Common myeloid progenitor, CD34-positive (primary cell): ENCODE measurements at regions of chr10 and their contacts with region 1.

Region 1: GRCh38 chr10:75235375-75236177 is at the start of gene COMTD1:
- DNase-seq: peak; percentile 87 to 92 (median 89)
- H3K4me3 ChIP-seq: peak within 1 kb of the TSS; percentile 50 to 86 (median 78)
- H3K27ac ChIP-seq: peak within 1 kb of the TSS in 1 of 2 experiments; percentile 43
- H3K4me1 ChIP-seq: peaks cover 0 to 22% (median 16%) of the 10 kb centered on the region in 4 experiments
- H3K27me3 ChIP-seq: no peaks in the 10 kb centered on the region

Region 2: DNA sequence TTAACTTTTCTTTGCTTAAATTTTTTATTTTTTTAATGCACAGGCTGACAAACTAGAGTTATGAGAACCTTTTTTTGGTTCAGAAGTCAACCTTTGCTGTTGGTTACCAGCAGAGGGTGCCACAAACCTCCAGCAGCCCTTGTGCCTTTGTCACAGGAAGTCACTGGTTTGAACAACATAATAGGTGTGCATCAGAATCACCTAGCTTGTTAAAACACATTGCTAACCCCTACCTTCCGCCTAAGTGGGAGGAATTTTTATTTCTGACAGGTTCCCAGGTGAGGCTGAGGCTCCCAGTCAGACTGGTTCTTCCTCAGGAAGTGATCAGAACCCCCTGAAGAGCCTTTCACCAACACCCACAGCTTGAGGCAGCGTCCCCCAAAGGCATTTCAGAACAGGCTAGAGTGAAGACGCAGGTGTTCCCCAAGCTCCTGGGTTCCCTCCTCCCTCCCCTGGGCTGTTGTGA is 47.6 kb before region 1 on chr10:
- CTCF ChIA-PET with region 1: interaction called, 46 read pairs
- POLR2A ChIA-PET with region 1: no interaction called
- DNase-seq: peak; percentile 70 to 88 (median 83)
- H3K4me3 ChIP-seq: no peak overlapping the region
- H3K27ac ChIP-seq: no peak overlapping the region
- H3K4me1 ChIP-seq: no peaks in the 10 kb centered on the region
- H3K27me3 ChIP-seq: no peaks in the 10 kb centered on the region

Region 3: DNA sequence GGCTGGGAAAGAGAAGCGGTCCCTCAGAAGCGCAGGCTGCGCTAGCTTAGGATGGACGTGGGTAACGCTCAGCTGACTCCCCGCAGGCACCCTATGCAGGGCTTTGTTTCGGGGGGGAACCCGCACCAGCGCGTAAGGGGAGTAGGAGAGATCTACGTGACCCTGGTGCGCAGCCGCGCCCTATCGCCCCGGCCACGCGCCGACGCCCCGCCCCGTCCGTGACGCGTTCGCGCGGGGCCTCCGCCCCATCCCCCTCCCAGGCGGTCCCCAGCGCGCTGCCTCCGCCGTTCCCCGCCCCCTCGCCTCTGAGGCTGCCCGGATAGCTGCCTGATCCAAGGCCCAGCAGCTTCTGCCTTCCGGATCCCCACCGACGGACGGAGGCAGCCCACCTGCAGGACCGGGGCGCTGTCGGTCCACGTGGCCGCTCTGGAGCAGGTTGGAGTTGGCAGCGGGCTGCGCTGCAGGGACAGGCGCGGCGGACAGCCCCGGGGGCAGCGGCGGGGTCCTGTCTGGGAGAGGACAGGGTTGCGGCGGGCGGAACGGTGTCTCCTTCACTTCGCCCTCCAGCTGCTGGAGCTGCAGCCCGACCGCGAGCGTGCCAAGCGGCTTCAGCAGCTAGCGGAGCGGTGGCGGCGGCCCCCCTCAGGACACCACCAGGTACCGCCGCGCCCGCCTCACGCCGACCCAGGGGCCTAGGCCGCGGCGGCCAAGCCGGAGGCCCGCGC is 25.1 kb before region 1 on chr10 and contains the start of gene VDAC2:
- CTCF ChIA-PET with region 1: interaction called, 70 read pairs
- POLR2A ChIA-PET with region 1: interaction called, 8 read pairs
- DNase-seq: peak; percentile 90 to 96 (median 95)
- H3K4me3 ChIP-seq: peak within 1 kb of the TSS; percentile 89 to 98 (median 96)
- H3K27ac ChIP-seq: peak within 1 kb of the TSS; percentile 93 to 95
- H3K4me1 ChIP-seq: peaks cover 8 to 23% (median 17%) of the 10 kb centered on the region in 4 experiments
- H3K27me3 ChIP-seq: no peaks in the 10 kb centered on the region

Region 4: DNA sequence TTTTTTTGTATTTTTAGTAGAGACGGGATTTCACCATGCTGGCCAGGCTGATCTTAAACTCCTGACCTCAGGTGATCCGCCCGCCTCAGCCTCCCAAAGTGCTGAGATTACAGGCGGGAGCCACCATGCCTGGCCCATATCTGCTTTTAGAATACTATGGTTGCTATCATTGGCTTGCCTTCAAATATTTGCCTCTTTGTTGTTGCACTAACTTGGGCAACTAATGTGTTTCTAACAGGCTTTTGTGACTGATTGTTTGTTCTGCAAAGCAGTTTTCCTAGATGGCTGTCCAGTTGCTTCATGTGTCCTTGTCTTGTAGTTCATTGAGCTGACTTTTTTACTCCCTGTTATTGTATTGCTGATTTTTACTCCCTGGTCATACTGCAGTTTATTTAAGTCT is 15.3 kb before region 1 on chr10:
- CTCF ChIA-PET with region 1: interaction called, 70 read pairs
- POLR2A ChIA-PET with region 1: interaction called, 6 read pairs
- DNase-seq: no peak
- H3K4me3 ChIP-seq: no peak overlapping the region
- H3K27ac ChIP-seq: no peak overlapping the region
- H3K4me1 ChIP-seq: no peaks in the 10 kb centered on the region
- H3K27me3 ChIP-seq: no peaks in the 10 kb centered on the region

Region 5: GRCh38 chr10:75245491-75246250 is 10.1 kb after region 1 on chr10:
- CTCF ChIA-PET with region 1: interaction called, 13 read pairs
- POLR2A ChIA-PET with region 1: interaction called, 3 read pairs
- DNase-seq: no peak
- H3K4me3 ChIP-seq: no peak overlapping the region
- H3K27ac ChIP-seq: no peak overlapping the region
- H3K4me1 ChIP-seq: no peaks in the 10 kb centered on the region
- H3K27me3 ChIP-seq: peaks cover 0 to 2% (median 0%) of the 10 kb centered on the region in 5 experiments

Region 6: DNA sequence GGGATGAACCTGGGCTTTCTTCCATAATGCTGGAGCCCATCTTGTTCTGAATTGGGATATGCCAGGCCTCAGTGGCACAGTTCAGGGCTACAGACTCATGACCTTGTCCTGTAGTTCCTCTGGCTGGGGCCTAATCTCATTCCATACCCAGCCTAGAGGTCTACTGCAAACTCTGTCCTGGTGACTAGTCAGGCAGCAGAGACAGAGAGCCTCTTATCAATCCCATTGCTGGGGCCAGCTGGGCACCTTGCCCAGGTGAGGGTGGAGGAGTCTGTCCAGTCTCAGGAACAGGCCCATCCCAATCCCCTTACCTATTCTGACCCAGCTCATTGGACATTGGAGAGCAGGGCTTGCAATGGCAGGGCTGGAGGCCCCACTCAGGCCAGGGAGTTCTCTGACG is 28.2 kb after region 1 on chr10:
- CTCF ChIA-PET with region 1: no interaction called
- POLR2A ChIA-PET with region 1: no interaction called
- DNase-seq: no peak
- H3K4me3 ChIP-seq: no peak overlapping the region
- H3K27ac ChIP-seq: no peak overlapping the region
- H3K4me1 ChIP-seq: peaks cover 0 to 12% (median 5%) of the 10 kb centered on the region in 4 experiments
- H3K27me3 ChIP-seq: no peaks in the 10 kb centered on the region